ENCODE measurements at regions of chr2 and their contacts with region 1.

Region 1: GRCh38 chr2:95076784-95077529 is 44.7 kb downstream of the MRPS5 start:
- DNase-seq: peak; percentile 92 to 93
- H3K4me3 ChIP-seq: peak overlapping the region; percentile 55
- H3K4me3 Mint-ChIP-seq: peak overlapping the region; percentile 71
- H3K27ac Mint-ChIP-seq: no peak overlapping the region
- H3K4me1 ChIP-seq: no peaks in the 10 kb centered on the region
- H3K4me1 Mint-ChIP-seq: no peaks in the 10 kb centered on the region
- H3K27me3 ChIP-seq: no peaks in the 10 kb centered on the region
- H3K27me3 Mint-ChIP-seq: no peaks in the 10 kb centered on the region
- CTCF ChIP-seq: peak; percentile 94

Region 2: GRCh38 chr2:94890234-94890633 is 186.7 kb before region 1 on chr2:
- CTCF ChIA-PET with region 1: no interaction called
- POLR2A ChIA-PET with region 1: no interaction called
- intact Hi-C with region 1: no loop called
- DNase-seq: no peak
- H3K4me3 ChIP-seq: no peak overlapping the region
- H3K4me3 Mint-ChIP-seq: no peak overlapping the region
- H3K27ac Mint-ChIP-seq: no peak overlapping the region
- H3K4me1 ChIP-seq: no peaks in the 10 kb centered on the region
- H3K4me1 Mint-ChIP-seq: no peaks in the 10 kb centered on the region
- H3K27me3 ChIP-seq: no peaks in the 10 kb centered on the region
- H3K27me3 Mint-ChIP-seq: peaks cover 11% of the 10 kb centered on the region
- CTCF ChIP-seq: no peak

Region 3: GRCh38 chr2:94956797-94957391 is 120.1 kb before region 1 on chr2:
- CTCF ChIA-PET with region 1: no interaction called
- POLR2A ChIA-PET with region 1: no interaction called
- intact Hi-C with region 1: no loop called
- DNase-seq: peak in 1 of 2 experiments; percentile 56
- H3K4me3 ChIP-seq: no peak overlapping the region
- H3K4me3 Mint-ChIP-seq: no peak overlapping the region
- H3K27ac Mint-ChIP-seq: no peak overlapping the region
- H3K4me1 ChIP-seq: no peaks in the 10 kb centered on the region
- H3K4me1 Mint-ChIP-seq: no peaks in the 10 kb centered on the region
- H3K27me3 ChIP-seq: no peaks in the 10 kb centered on the region
- H3K27me3 Mint-ChIP-seq: peaks cover 19% of the 10 kb centered on the region
- CTCF ChIP-seq: peak; percentile 82 to 89

Region 4: DNA sequence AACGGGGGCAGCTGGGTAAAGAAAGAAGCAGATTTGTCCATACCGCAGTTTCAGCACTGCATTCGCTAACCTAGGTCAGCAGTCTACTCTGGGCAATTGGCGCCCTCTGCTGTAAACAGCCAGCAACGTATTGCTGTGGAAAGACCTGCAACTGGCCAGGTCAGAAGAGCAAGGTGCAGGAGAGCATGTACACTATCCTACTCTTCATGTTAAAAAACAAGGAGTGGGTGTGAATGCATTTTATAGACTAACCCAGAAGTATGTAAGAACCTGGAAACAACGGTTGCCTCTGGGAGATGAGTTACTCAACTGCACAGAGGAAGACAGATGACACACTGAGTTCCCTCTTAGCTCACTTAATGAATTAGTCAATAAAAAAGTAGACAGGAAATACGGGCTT is 38.5 kb after region 1 on chr2:
- CTCF ChIA-PET with region 1: interaction called, 11 read pairs
- POLR2A ChIA-PET with region 1: no interaction called
- intact Hi-C with region 1: loop called (anchors 1 kb)
- DNase-seq: peak; percentile 79
- H3K4me3 ChIP-seq: no peak overlapping the region
- H3K4me3 Mint-ChIP-seq: no peak overlapping the region
- H3K27ac Mint-ChIP-seq: no peak overlapping the region
- H3K4me1 ChIP-seq: peaks cover 6% of the 10 kb centered on the region; the same call in 1 of the 2 replicates
- H3K4me1 Mint-ChIP-seq: peaks cover 15% of the 10 kb centered on the region
- H3K27me3 ChIP-seq: no peaks in the 10 kb centered on the region
- H3K27me3 Mint-ChIP-seq: no peaks in the 10 kb centered on the region
- CTCF ChIP-seq: peak; percentile 59 to 87

Region 5: DNA sequence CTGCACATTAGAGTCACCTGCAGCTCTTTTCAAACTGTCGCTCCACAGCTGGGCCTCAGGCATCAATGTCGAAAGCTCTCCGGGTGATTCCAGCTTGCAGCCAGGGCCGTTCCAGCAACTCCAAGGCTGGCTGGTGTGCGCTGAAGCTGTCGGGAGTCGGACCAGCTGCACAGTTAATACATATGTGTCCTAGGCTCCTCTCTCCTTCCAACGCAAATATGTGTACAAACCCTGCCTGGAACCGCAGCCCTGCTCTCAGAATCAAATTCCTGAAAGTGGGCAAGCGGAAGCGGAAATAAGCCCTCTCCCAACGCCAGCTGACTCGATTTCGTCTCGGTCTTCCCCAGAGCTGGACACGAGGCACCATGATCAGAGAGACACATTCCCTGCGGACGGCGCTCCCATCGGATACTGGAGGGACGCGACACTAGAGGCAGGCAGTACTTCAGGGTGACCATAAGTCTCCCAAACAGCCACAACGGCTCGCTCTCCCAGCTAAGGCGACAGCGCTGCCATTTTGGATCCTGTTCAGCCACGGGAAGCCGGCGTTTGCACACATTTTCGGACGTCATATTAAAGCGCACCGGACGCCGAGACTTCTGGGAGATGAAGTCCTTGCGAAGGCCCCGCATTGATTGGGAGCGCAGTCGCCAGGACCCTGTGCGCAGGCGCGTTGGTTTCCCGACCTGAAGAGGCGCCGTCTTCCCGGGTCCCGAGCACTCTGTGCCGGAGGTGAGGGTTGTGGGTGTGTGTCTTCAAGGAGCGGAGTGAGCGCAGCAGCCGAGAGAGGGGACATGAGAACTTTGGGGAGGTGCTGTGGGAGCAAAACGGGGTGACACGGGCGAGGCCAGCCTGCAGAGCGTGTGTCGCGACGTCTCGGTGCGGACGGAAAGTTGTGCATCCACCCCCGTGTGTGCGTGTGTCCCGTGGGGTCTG is 88.4 kb after region 1 on chr2 and contains the start of gene ZNF2:
- CTCF ChIA-PET with region 1: interaction called, 7 read pairs
- POLR2A ChIA-PET with region 1: no interaction called
- intact Hi-C with region 1: loop called (anchors 2 kb)
- DNase-seq: peak; percentile 97 to 98
- H3K4me3 ChIP-seq: peak within 1 kb of the TSS; percentile 89
- H3K4me3 Mint-ChIP-seq: peak within 1 kb of the TSS; percentile 95
- H3K27ac Mint-ChIP-seq: peak within 1 kb of the TSS; percentile 97
- H3K4me1 ChIP-seq: 0 out of 2 replicates have a peak, but pooled peaks cover 3% of the 10 kb centered on the region
- H3K4me1 Mint-ChIP-seq: peaks cover 7% of the 10 kb centered on the region
- H3K27me3 ChIP-seq: no peaks in the 10 kb centered on the region
- H3K27me3 Mint-ChIP-seq: no peaks in the 10 kb centered on the region
- CTCF ChIP-seq: no peak
- total RNA-seq, gene ZNF2: 3.8 and 4.2 TPM in 2 replicates

Measured in Caco-2 (cell line).